Activated CD4-positive, alpha-beta memory T cell treated with anti-CD3 and anti-CD28 coated beads, Interleukin-2, amount 10 ng/mL, durations not matched to agents 7 days and 5 days (primary cell): ENCODE measurements at regions of chr19 and their contacts with region 1.

Region 1: GRCh38 chr19:34351382-34351826 is 13.6 kb upstream of the GPI start:
- DNase-seq: peak; percentile 68
- H3K4me3 Mint-ChIP-seq: peak overlapping the region; percentile 17
- H3K27ac Mint-ChIP-seq: peak overlapping the region; percentile 97
- H3K4me1 Mint-ChIP-seq: peaks cover 32% of the 10 kb centered on the region
- H3K27me3 Mint-ChIP-seq: no peaks in the 10 kb centered on the region

Region 2: DNA sequence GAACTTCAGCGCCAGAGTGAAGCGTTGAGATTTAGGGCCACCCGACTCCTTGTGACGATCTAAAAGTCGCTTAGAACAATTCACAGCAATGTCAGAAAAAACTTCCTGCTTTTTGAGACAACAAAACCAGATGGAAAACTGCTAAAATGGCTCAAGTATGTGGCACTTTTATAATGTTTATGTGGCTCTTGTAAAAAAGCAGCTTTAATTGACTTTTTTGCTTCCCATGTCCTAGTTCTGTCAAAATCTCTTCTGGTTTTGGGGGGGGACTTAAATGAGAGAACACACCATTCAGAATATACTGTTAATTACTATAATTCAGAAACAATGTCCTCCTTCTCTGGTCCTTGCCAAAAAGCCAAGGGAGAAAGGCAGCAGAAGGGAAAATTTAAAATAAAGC is 333.8 kb before region 1 on chr19:
- CTCF ChIA-PET with region 1: no interaction called
- POLR2A ChIA-PET with region 1: no interaction called
- DNase-seq: no peak
- H3K4me3 Mint-ChIP-seq: no peak overlapping the region
- H3K27ac Mint-ChIP-seq: no peak overlapping the region
- H3K4me1 Mint-ChIP-seq: no peaks in the 10 kb centered on the region
- H3K27me3 Mint-ChIP-seq: peaks cover 47% of the 10 kb centered on the region

Region 3: GRCh38 chr19:34364830-34365462 is 13.5 kb after region 1 on chr19 and contains the start of gene GPI:
- CTCF ChIA-PET with region 1: interaction called, 15 read pairs
- POLR2A ChIA-PET with region 1: interaction called, 20 read pairs
- DNase-seq: peak; percentile 74
- H3K4me3 Mint-ChIP-seq: peak within 1 kb of the TSS; percentile 95
- H3K27ac Mint-ChIP-seq: peak within 1 kb of the TSS; percentile 88
- H3K4me1 Mint-ChIP-seq: peaks cover 67% of the 10 kb centered on the region
- H3K27me3 Mint-ChIP-seq: no peaks in the 10 kb centered on the region
- total RNA-seq, gene GPI: 658 to 662 TPM